ENCODE measurements at regions of chr1 and their contacts with region 1.

Region 1: GRCh38 chr1:155017041-155017945 is 14.7 kb downstream of the ZBTB7B start:
- DNase-seq: peak; percentile 87
- H3K4me3 Mint-ChIP-seq: peak overlapping the region; percentile 7
- H3K27ac Mint-ChIP-seq: peak overlapping the region; percentile 26
- H3K4me1 Mint-ChIP-seq: peaks cover 63% of the 10 kb centered on the region
- H3K27me3 Mint-ChIP-seq: no peaks in the 10 kb centered on the region

Region 2: GRCh38 chr1:154344977-154345837 is 672.1 kb before region 1 on chr1:
- CTCF ChIA-PET with region 1: no interaction called
- POLR2A ChIA-PET with region 1: no interaction called
- DNase-seq: peak; percentile 87
- H3K4me3 Mint-ChIP-seq: peak overlapping the region; percentile 73
- H3K27ac Mint-ChIP-seq: peak overlapping the region; percentile 65
- H3K4me1 Mint-ChIP-seq: peaks cover 75% of the 10 kb centered on the region
- H3K27me3 Mint-ChIP-seq: no peaks in the 10 kb centered on the region

Region 3: DNA sequence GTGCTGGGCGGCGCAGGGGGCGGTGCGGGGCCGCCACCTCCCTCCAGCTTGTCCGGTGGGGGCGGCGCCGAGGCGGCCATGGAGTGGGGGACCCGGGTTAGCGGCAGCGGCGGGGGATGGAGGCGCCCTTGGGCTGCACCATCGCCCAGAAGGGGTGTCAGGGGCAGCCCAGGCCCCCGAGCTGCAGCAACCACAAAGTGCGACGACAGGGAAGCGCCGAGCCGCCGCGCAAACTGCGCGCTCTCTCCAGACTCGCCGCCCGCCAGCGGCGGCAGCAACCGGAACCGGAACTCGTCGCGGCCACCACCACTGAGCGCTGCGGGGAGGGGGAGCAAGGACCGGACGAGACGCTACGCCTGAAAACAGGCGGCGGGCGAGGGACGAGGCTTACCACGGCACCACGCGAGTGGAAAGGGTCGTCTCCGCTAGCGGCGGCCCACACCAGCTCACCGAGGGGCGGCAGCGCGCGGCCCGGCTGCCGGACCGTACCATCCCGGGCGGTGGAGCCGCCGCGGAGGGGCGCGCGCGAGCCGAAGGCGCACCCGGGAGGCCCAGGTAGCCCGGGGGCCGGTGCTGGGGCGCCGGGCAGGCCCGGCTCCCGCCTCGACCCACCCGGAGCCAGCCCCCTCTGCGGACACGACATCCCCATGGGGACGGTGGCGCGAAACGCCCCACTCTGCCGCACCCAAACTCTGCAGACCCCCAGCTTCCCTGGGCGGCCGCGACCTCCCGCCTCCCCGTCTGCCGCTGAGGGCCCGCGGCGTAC is 55.6 kb before region 1 on chr1 and contains the start of gene PYGO2:
- CTCF ChIA-PET with region 1: interaction called, 16 read pairs
- POLR2A ChIA-PET with region 1: interaction called, 6 read pairs
- DNase-seq: peak; percentile 83
- H3K4me3 Mint-ChIP-seq: peak within 1 kb of the TSS; percentile 97
- H3K27ac Mint-ChIP-seq: peak within 1 kb of the TSS; percentile 89
- H3K4me1 Mint-ChIP-seq: peaks cover 56% of the 10 kb centered on the region
- H3K27me3 Mint-ChIP-seq: no peaks in the 10 kb centered on the region
- total RNA-seq, gene PYGO2: 48.7 to 49.7 TPM

Region 4: DNA sequence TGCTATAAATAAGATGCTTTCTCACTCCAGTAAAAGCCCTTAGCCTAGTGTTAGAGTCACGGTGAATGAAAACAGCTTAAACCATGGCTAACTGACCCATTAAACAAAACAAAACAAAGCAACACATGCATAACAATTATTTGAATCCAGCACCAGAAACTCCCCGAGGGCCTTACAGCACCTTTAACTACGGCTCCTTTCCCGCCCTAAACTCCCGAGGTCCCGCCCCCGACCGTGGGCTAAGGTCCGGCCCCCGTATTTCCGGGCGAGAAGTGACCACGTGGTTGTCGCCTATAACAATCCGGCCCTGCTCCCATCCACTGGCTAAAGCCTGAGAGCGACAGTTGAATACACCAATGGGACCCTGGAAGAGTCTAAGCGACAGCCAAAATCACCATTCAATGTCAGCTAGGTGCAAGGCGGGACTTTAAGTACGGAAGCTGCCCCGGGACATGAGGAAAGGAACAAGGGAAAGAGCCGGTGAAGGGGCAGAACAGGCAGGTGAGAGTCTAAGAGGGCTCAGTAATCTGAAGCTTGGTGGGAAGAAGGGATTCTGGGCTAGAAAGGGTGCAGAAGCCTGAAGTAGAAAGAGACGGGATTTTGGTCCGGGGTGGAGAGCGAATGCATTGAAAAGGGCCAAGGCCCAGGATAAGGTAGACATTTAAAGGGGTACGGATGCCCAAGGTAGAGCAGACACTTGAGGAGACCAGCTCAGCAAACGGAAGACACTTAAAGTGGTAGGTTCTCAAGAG is 34.2 kb before region 1 on chr1 and contains the start of gene FLAD1:
- CTCF ChIA-PET with region 1: interaction called, 51 read pairs
- POLR2A ChIA-PET with region 1: interaction called, 43 read pairs
- DNase-seq: peak; percentile 97
- H3K4me3 Mint-ChIP-seq: no peak within 1 kb of the TSS
- H3K27ac Mint-ChIP-seq: no peak within 1 kb of the TSS
- H3K4me1 Mint-ChIP-seq: peaks cover 28% of the 10 kb centered on the region
- H3K27me3 Mint-ChIP-seq: no peaks in the 10 kb centered on the region
- total RNA-seq, gene FLAD1: 34.7 to 35.1 TPM

Region 5: GRCh38 chr1:155001675-155002463 is 15.4 kb before region 1 on chr1:
- CTCF ChIA-PET with region 1: interaction called, 139 read pairs
- POLR2A ChIA-PET with region 1: interaction called, 203 read pairs
- DNase-seq: peak; percentile 99
- H3K4me3 Mint-ChIP-seq: peak overlapping the region; percentile 90
- H3K27ac Mint-ChIP-seq: peak overlapping the region; percentile 91
- H3K4me1 Mint-ChIP-seq: peaks cover 56% of the 10 kb centered on the region
- H3K27me3 Mint-ChIP-seq: no peaks in the 10 kb centered on the region

Region 6: DNA sequence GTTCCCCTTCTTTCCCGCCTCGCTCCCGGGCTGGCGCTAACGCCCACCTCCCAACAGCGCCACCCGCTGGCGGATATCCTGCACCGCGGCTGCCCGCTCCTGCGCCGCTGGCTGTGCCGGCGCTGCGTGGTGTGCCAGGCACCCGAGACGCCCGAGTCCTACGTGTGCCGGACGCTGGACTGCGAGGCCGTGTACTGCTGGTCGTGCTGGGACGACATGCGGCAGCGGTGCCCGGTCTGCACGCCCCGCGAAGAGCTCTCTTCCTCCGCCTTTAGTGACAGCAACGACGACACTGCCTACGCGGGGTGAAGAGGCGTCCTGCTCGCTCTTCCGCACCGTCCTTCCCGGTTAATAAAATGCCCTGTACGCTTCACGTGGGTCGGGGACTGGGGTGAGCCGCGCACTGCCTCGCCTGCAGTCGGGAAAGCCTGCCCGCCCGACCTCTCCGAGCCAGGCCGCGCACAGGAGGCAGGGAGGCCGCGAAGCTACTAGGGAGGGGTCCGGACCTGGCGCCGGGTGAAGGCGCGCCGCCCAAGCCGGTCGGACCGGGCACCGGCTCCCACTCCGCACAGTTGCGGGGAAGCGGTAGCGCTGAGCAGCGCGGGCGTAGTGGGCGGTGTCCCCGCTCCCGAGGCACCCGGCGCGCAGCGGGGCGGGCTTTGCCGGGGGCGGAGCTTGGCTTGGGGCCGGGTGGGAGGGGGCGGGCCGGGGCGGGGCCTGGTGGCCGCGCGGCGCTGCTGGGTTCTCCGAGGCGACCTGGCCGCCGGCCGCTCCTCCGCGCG is 33.5 kb after region 1 on chr1 and contains the start of gene ADAM15:
- CTCF ChIA-PET with region 1: interaction called, 16 read pairs
- POLR2A ChIA-PET with region 1: interaction called, 3 read pairs
- DNase-seq: peak; percentile 86
- H3K4me3 Mint-ChIP-seq: peak within 1 kb of the TSS; percentile 84
- H3K27ac Mint-ChIP-seq: peak within 1 kb of the TSS; percentile 80
- H3K4me1 Mint-ChIP-seq: peaks cover 30% of the 10 kb centered on the region
- H3K27me3 Mint-ChIP-seq: no peaks in the 10 kb centered on the region
- total RNA-seq, gene ADAM15: 73.9 to 76.4 TPM

Measured in activated CD4-positive, alpha-beta memory T cell treated with anti-CD3 and anti-CD28 coated beads, Interleukin-2, amount 10 ng/mL, durations not matched to agents 7 days and 5 days (primary cell).